Left colon (tissue), 2 donors: ENCODE measurements at regions of chr10 and their contacts with region 1.

Region 1: GRCh38 chr10:15824498-15824897 is 35.8 kb downstream of the MINDY3 start:
- DNase-seq: no peak
- ATAC-seq: no peak

Region 2: DNA sequence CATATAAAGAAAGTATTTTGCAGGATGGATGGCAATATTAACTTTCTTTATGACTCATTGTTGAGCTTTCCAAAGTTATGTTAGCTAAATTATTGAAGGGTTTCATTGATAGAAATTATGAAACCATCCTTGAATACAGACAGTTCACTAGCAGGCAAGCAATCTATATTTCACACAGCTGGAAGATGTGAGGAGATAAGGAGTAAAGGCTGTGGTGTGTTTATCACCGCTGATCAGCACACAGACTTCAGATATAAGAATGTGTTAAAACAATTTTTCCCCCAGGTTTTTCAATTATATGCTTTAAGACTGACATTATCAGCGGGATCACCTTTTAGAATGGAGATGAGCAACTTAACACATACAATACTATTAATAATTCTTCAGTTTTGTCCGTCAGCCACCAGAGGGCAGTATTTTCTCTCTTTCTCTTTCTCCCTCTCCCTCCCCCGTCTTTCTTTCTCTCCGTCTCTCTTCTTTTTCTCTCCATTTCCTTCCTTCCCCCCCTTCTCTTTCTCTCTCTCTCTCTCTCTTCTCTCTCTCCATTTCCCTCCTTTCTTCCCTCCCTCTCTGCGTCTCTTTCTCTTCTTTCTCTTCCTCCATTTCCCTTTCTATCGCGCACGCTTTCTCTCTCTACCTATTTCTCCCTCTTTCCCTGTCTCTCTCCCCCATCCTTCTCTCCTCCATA is 390.5 kb before region 1 on chr10:
- intact Hi-C with region 1: loop called in 1 of 2 experiments (anchors 10 kb)
- DNase-seq: no peak
- ATAC-seq: peak; percentile 64

Region 3: GRCh38 chr10:15725603-15726002 is 98.9 kb before region 1 on chr10:
- intact Hi-C with region 1: loop called in 1 of 2 experiments (anchors 10 kb)
- DNase-seq: no peak
- ATAC-seq: peak; percentile 66